ENCODE measurements at regions of chr10 and their contacts with region 1.

Region 1: GRCh38 chr10:68720793-68721672 is at the start of gene CCAR1:
- DNase-seq: peak; percentile 95
- H3K4me3 Mint-ChIP-seq: peak within 1 kb of the TSS; percentile 80
- H3K27ac Mint-ChIP-seq: peak within 1 kb of the TSS; percentile 89
- H3K4me1 Mint-ChIP-seq: peaks cover 10% of the 10 kb centered on the region
- H3K27me3 Mint-ChIP-seq: no peaks in the 10 kb centered on the region
- total RNA-seq, gene CCAR1: 94.6 and 108 TPM in 2 replicates

Region 2: DNA sequence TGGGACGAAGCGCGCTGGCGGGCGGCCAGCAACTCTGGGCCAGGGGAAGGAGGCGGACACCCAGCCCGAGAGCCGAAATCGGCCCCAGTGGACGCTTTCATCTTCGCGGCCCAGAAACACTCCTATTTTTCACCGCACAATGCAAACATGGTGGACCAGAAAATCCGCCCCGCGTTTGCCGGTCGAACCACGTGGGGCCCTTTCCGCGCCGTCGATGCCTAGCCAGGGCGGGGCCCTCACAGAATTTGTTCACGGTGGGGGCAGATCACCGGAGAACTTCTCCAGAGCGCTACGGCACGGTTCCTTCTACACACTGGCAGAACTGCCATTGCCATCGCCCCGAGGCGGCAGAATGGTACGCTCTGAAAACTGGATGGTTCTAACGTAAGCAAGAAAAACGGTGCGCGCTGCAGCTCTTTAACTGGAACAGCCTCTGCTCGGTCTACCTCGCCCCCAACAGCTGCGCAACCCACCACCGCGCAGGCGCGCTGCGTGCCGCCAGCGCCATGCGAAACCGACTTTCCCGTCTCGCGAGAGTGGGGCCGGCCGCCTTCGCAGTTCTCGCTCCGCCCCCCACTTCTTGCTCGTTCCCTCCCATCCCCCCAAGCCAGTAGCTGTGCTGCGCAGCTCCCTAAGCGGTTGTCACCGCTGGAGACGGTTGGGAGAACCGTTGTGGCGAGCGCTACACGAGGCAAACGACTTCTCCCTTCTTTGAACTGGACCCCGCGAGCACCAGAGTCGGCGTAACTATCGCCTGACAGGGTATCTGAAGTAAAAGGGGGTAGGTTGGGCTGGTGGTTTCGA is 389.4 kb before region 1 on chr10 and contains the start of gene HNRNPH3:
- intact Hi-C with region 1: loop called (anchors 2 kb)
- DNase-seq: peak; percentile 98
- H3K4me3 Mint-ChIP-seq: peak within 1 kb of the TSS; percentile 99
- H3K27ac Mint-ChIP-seq: peak within 1 kb of the TSS; percentile 100
- H3K4me1 Mint-ChIP-seq: peaks cover 45% of the 10 kb centered on the region
- H3K27me3 Mint-ChIP-seq: no peaks in the 10 kb centered on the region
- total RNA-seq, gene HNRNPH3: 172 and 183 TPM in 2 replicates

Region 3: DNA sequence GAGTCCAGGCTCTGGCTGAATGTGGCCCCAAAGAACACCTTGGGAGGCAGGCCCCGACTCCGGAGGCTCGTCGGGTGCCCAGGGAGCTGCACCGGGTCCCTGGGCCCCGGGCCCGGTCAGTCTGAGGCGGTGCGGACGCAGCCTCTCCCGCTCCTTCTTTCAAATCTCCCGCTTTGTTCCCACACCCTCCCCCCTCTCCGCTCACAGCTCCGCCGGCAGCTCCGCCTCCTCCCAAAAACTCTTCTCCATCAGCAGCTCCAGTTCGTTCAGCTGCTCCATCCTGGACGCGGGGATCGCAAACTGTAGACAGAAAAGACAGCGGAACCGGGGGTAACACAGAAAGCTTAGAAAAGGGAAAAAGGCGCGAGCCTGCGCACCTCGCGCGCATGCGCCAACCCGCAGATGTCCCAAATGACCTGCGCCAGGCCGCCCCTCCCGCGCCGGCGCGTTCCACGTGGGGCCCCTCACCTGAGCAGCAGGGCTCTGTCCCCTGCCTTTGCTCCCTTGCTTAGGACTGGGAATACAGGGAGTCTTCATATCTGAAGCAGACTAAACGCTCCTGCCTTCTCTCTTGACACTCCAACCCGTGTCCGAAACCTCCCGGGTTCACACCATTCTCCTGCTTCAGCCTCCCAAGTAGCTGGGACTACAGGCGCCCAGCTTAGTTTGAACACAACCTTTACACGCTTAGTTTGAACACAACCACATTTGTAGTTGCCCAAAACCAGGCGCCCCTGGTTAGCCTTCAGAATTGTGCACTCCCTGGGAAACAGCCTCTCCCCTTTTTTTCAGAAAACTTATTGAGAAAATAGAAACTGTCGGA is 249.2 kb before region 1 on chr10 and contains the start of gene DNA2:
- intact Hi-C with region 1: loop called (anchors 5 kb)
- DNase-seq: peak; percentile 79
- H3K4me3 Mint-ChIP-seq: peak within 1 kb of the TSS; percentile 97
- H3K27ac Mint-ChIP-seq: peak within 1 kb of the TSS; percentile 95
- H3K4me1 Mint-ChIP-seq: peaks cover 26% of the 10 kb centered on the region
- H3K27me3 Mint-ChIP-seq: no peaks in the 10 kb centered on the region
- total RNA-seq, gene DNA2: 51.6 and 54.3 TPM in 2 replicates

Region 4: DNA sequence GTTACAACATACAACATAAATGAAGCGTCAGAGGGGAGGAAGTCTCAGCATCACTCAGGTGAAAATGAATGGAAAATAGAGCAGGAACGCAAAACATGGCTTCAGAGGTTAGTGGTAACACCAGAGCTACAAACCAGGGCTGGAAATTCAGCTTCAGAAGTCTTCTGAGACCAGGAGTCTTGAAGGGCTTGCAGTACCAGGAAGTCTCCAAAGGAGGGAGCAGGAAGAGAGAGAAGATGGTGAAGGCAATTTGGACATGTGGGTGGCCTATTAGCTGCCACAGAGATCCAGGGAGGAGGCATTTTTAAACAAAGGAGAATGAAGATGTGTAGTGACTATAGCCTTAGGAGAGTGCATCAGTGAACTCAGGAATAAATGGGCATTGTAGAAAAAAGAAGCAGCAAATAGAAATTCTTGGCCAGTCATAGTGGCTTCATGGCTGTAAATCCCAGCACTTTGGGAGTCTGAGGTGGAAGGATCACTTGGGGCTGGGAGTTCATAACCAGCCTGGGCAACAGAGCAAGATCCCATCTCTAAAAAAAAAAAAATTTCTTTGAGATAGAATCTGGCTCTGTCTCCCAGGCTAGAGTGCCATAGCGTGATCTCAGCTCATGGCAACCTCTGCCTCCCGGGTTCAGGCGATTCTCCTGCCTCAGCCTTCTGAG is 170.2 kb before region 1 on chr10:
- intact Hi-C with region 1: loop called (anchors 5 kb)
- DNase-seq: peak; percentile 24
- H3K4me3 Mint-ChIP-seq: no peak overlapping the region
- H3K27ac Mint-ChIP-seq: no peak overlapping the region
- H3K4me1 Mint-ChIP-seq: no peaks in the 10 kb centered on the region
- H3K27me3 Mint-ChIP-seq: no peaks in the 10 kb centered on the region

Region 5: DNA sequence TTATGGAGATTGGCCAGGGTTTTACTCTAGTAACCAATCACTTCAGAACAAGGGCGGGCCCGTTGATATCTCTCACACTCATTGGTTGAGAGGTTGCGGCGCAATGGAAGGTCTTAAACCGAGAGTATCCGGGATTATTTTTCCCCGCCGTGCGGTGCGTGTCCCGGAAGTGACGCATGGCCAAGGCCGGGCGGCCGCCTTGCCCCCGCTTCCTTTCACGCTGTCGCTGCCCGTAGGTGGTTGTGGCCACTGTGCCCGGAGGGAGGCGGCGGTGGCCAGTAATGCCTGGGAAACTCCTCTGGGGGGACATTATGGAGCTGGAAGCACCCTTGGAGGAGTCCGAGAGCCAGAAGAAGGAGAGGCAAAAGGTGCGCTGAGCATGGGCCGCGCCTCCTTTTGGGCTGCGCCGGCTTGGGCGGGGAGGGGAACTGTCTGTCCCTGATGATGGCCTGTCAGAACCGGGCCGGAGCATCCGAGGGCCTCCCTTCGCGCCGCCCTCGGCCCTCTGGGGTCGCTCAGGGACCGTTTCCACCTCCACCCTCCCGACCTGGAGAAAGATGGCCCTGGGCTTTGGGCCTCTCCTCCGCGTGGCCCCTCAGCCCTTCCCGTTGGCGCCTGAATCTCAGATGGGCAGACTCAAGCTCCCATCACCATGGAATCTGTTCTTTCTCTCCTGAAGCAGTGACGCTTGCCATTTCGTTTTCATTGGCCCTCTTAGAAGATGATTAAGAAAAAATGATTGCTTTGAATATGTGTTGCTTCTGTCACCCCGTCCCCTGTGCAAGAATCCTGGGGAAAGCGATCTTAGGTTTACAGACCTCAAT is 180.3 kb after region 1 on chr10 and contains the start of gene DDX50:
- intact Hi-C with region 1: loop called (anchors 1 kb)
- DNase-seq: peak; percentile 95
- H3K4me3 Mint-ChIP-seq: peak within 1 kb of the TSS; percentile 92
- H3K27ac Mint-ChIP-seq: peak within 1 kb of the TSS; percentile 99
- H3K4me1 Mint-ChIP-seq: peaks cover 40% of the 10 kb centered on the region
- H3K27me3 Mint-ChIP-seq: peaks cover 3% of the 10 kb centered on the region
- total RNA-seq, gene DDX50: 57.0 and 63.4 TPM in 2 replicates

Region 6: GRCh38 chr10:69318106-69318866 is 597.3 kb after region 1 on chr10:
- intact Hi-C with region 1: loop called (anchors 5 kb)
- DNase-seq: peak; percentile 90
- H3K4me3 Mint-ChIP-seq: peak overlapping the region; percentile 97
- H3K27ac Mint-ChIP-seq: peak overlapping the region; percentile 86
- H3K4me1 Mint-ChIP-seq: peaks cover 49% of the 10 kb centered on the region
- H3K27me3 Mint-ChIP-seq: no peaks in the 10 kb centered on the region

Measured in activated T-helper 2 cell treated with anti-CD3 and anti-CD28 coated beads, Interferon-gamma antibody, Interleukin-2, Interleukin-4, amounts not matched to agents 10 μg/mL and 5 μg/mL and 100 μg/mL, durations not matched to agents 14 hours and 24 hours and 36 hours (primary cell).